ENCODE measurements at regions of chr11 and their contacts with region 1.

Region 1: DNA sequence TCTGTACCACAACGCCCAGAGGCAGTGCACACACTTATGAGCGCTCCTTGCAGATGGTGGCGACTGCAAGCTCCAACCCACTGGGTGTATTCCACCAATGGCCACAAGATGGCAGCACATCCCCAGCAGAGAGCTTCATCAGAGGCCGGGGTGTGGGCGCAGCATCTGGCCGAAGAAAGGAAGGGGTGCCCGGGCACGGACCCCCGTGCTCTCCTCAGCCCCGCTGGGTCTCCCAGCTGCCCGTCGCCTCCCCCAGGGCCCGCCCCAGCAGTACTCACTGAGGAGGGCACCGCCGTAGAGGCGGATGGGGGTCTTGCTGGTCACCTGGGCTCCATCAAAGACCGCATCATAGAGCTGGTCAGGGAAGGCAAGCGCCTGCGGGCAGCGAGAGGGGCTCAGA is 14.2 kb downstream of the TP53I11 start:
- DNase-seq: peak; percentile 77 to 98 (median 92)

Region 2: DNA sequence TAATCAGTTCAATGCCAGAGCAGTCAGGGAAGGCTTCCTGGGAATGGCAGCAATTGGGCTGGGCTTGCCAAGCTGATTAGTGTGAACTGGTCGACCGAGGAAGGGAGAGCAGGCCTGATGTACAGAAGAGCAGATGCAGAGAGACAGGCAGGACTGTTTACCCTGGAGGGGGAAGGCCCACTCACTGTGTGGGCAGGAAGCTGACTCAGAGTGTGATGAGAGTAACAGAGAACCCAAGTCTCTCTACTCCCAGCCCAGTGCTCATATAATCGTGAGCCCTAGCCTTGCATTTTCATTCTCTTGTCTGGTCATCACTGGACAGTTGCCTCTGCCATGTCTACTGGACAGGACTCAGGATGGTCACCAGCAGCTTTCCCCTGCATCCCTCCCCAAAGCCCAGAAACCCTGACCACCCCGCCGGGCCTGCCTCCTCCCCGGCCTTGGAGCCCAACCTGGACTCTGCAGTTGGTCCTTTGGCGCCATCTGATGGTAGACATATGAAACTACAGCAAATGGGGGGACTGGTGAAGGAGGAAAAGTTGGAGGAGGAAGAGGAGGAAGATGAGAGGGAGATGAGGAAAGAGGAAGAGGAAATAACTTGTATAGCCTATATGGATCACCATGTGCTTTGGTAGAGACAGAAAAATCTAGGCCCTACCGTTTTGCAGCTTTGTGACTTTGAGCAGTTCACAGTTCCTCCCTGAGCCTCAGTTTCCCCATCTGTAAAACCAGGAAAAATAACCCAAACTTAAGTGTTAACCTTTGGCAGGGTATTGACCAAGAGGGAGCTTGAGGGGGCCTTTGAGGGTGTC is 166.5 kb after region 1 on chr11:
- intact Hi-C with region 1: loop called (anchors 1 kb)
- DNase-seq: peak in 5 of 10 donors; percentile 59 to 92 (median 65)

Region 3: GRCh38 chr11:45298718-45299117 is 362.2 kb after region 1 on chr11:
- intact Hi-C with region 1: loop called (anchors 10 kb)
- DNase-seq: no peak

Region 4: DNA sequence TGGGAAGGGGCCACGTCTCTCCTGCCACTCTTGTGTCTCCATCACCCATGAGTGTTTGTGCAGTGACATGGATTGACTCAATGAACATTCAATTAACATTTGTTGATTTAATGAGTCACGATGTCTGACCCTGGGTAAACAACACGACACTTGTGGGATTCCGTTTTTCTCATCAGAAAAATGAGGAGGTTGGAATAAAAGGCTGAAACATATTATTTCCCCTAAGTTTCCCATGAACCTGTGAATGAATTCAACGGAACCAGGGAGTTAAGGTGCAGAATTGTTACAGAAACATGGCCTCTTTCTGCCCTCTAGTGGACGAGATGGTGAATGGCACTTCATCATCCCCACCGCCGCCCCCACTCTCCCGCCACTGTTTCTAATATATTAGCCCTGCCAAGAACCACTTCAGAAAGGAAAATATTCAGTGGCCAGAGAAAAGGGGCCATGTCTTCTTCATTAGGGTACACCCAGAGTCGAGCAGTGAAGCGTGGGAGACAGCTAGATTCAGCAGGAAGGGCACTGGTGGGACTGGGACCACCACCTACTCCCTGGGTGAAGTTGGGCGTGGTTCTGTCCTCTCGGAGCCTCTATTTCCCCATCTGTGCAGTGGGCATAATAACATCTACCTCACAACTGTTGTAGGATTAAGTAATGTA is 395.9 kb after region 1 on chr11:
- intact Hi-C with region 1: loop called (anchors 5 kb)
- DNase-seq: peak in 3 of 10 donors; percentile 37 to 72 (median 45)